Activated T-helper 1 cell treated with anti-CD3 and anti-CD28 coated beads, Interleukin-12 subunit alpha, Interleukin-12 subunit beta, Interleukin-2, Interleukin-4 antibody, amounts not matched to agents 30 ng/mL and 10 ng/mL and 1 ng/mL, durations not matched to agents 14 hours and 24 hours and 36 hours (primary cell): ENCODE measurements at regions of chr2 and their contacts with region 1.

Region 1: GRCh38 chr2:55311444-55311870 is 42.4 kb upstream of the MTIF2 start:
- DNase-seq: no peak
- H3K4me3 Mint-ChIP-seq: no peak overlapping the region
- H3K27ac Mint-ChIP-seq: peak overlapping the region; percentile 57
- H3K4me1 Mint-ChIP-seq: peaks cover 22% of the 10 kb centered on the region
- H3K27me3 Mint-ChIP-seq: no peaks in the 10 kb centered on the region

Region 2: GRCh38 chr2:54680397-54681041 is 630.9 kb before region 1 on chr2:
- intact Hi-C with region 1: loop called (anchors 5 kb)
- DNase-seq: peak; percentile 39
- H3K4me3 Mint-ChIP-seq: peak overlapping the region; percentile 78
- H3K27ac Mint-ChIP-seq: peak overlapping the region; percentile 65
- H3K4me1 Mint-ChIP-seq: peaks cover 59% of the 10 kb centered on the region
- H3K27me3 Mint-ChIP-seq: peaks cover 33% of the 10 kb centered on the region

Region 3: DNA sequence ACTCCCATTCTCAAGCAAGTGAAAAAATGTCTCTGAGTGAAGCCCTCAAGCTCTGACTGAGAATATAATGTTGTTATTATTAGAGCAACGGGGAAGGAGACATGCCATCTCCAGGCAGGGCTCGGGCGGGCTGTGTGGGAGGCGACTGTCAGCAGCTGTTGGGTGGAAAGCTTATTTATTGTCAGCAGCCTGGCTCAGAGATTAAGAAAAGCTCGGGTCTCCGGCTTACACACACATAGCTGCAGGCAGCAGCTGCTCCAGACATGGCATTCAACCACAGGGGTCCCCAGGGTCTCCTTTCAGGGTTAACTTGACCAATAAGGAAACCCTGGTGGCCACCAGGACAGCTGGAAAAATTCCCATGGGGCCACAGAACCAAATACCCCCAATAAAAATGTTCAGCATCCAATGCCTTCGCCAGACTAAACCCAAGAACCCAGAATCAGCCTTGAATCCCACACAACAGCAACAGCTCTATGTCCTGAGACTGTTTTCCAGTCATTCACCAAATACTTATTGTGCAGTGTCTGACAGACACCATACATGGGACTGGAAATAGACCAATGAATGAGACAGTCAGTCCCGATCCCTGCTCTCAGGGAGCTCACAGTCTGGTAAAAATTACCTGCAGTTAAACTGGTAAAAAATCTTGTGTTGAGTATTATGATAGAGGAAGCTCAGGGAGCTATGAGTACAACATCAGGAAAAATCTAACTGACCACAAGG is 190.7 kb before region 1 on chr2:
- intact Hi-C with region 1: no loop called
- DNase-seq: no peak
- H3K4me3 Mint-ChIP-seq: no peak overlapping the region
- H3K27ac Mint-ChIP-seq: no peak overlapping the region
- H3K4me1 Mint-ChIP-seq: peaks cover 1% of the 10 kb centered on the region
- H3K27me3 Mint-ChIP-seq: peaks cover 6% of the 10 kb centered on the region

Region 4: DNA sequence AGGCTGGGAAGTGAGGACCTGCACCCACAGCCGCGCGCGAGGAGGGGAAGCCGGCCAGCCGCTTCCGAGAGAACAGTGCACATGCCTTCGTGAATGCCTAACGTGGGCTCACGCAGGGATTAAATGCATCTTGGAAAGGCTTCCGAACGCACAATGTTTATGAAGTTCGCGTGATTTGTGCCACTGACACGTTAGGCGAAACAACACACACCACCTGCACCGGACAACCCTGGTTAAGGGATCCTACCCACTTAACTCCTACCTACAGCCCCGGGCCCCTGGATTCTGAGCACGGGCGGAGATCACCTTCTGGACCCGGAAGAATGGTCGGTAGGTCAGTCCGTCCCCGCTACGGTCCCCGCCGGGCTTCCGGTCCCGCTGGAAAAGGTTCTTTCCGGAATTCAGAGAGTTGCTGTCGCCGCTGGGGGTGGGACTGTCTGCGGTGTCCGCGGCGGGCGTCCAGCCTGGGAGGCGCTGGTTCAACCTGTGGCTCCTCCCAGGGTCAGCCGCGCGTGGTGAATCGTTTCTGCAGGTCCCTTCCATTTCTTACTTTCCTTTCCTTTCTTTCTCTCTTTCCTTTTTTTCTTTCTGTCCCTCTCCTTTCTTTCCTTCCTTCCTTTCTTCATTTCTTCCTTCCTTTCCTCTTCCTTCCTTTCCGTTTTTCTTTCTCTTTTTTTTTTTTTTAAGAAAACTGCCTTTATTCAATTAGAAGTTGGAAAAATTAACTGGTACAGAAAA is 42.4 kb before region 1 on chr2 and contains the start of gene MTIF2:
- intact Hi-C with region 1: loop called (anchors 1 kb)
- DNase-seq: peak; percentile 87
- H3K4me3 Mint-ChIP-seq: peak within 1 kb of the TSS; percentile 93
- H3K27ac Mint-ChIP-seq: peak within 1 kb of the TSS; percentile 85
- H3K4me1 Mint-ChIP-seq: peaks cover 14% of the 10 kb centered on the region
- H3K27me3 Mint-ChIP-seq: no peaks in the 10 kb centered on the region
- total RNA-seq, gene MTIF2: 42.3 and 44.1 TPM in 2 replicates

Region 5: GRCh38 chr2:55282110-55282917 is 29.1 kb before region 1 on chr2:
- intact Hi-C with region 1: loop called (anchors 1 kb)
- DNase-seq: peak; percentile 85
- H3K4me3 Mint-ChIP-seq: peak overlapping the region; percentile 89
- H3K27ac Mint-ChIP-seq: peak overlapping the region; percentile 93
- H3K4me1 Mint-ChIP-seq: peaks cover 12% of the 10 kb centered on the region
- H3K27me3 Mint-ChIP-seq: peaks cover 2% of the 10 kb centered on the region

Region 6: DNA sequence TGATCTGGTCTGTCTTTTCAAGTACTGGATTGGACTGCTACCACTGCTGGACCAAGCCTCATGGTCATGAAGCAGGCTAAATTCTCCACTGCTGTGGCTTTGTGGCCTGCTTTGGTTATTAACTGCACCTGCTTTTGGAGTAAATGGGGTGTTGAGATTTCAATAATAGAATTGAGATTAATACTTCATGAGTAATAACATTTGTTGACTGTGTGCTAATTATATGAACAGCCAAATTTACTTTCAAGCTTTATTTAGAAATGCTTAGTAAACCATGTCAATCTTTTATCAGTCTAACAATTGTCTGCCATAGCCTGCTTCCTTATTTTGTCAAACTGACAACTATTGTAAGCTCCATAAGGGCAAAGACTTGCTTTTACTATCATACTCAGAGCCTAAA is 15.1 kb before region 1 on chr2:
- intact Hi-C with region 1: loop called (anchors 2 kb)
- DNase-seq: no peak
- H3K4me3 Mint-ChIP-seq: no peak overlapping the region
- H3K27ac Mint-ChIP-seq: no peak overlapping the region
- H3K4me1 Mint-ChIP-seq: peaks cover 15% of the 10 kb centered on the region
- H3K27me3 Mint-ChIP-seq: no peaks in the 10 kb centered on the region

Region 7: DNA sequence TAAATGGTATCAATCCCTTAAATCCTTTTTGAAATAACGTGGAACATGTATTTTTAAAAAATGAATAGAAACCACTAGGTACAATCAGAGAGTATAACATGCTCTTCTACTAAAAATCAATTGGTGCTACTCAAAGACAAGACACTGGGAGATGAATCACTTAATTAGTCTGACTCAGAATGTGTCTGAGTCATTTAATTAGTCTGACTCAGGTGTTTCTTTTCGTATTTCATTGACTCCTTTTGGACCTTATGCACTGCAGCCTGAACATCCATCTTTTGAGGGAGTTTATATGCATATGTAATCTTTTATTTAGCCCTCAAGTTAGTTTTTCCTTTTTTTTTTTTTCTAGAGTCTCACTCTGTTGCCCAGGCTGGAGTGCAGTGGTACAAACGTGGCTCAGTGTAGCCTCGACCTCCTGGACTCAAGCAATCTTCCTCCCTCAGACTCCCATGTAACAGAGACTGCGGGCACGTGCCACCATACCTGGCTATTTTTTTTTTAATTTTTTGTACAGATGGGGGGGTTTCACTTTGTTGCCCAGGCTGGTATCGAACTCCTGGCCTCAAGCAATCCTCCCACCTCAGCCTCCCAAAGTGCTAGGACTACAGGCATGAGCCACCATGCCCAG is 279.5 kb after region 1 on chr2:
- intact Hi-C with region 1: loop called (anchors 5 kb)
- DNase-seq: no peak
- H3K4me3 Mint-ChIP-seq: no peak overlapping the region
- H3K27ac Mint-ChIP-seq: peak overlapping the region; percentile 67
- H3K4me1 Mint-ChIP-seq: peaks cover 21% of the 10 kb centered on the region
- H3K27me3 Mint-ChIP-seq: no peaks in the 10 kb centered on the region